Caco-2 (cell line): ENCODE measurements at regions of chr15 and their contacts with region 1.

Region 1: DNA sequence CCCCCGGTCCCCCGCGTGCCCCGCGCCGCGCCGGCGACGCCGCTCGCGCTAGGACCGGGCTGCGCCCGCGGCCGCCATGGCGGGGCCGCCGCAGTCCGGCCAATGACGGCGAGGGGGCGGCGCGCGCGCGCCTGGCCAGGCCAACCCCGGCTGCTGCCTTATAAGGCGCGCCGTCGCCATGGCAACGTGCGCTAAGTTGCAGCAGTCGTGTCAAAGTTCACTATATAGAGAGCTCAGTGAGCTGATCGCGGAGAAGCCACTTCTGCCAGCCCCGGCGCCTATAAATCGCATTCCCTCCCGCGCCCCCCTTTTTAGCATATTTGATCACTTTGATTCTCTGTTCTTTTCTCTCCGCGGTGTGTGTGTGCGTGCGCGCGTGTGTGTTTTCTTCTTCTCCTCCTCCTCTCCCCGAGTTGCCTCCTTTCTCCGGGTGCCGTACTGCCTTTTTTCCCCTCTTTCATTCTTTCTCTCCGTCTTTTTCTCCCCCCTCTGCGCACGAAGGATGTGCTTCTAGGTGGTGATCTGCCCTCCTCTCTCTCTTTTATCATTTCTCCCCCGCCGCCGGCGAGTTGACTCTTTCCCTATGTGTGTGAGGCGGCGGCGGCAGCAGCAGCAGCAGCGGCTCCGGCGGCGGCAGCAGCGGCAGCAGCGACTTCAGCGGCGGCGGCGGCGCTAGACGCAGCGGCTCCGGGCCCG is at the start of gene NR2F2:
- DNase-seq: peak; percentile 96 to 97
- H3K4me3 ChIP-seq: peak within 1 kb of the TSS; percentile 84
- H3K4me3 Mint-ChIP-seq: peak within 1 kb of the TSS; percentile 83
- H3K27ac Mint-ChIP-seq: peak within 1 kb of the TSS; percentile 84
- H3K4me1 ChIP-seq: peaks cover 21% of the 10 kb centered on the region
- H3K4me1 Mint-ChIP-seq: peaks cover 19% of the 10 kb centered on the region
- H3K27me3 ChIP-seq: no peaks in the 10 kb centered on the region
- H3K27me3 Mint-ChIP-seq: no peaks in the 10 kb centered on the region
- CTCF ChIP-seq: no peak
- total RNA-seq, gene NR2F2: 134 and 140 TPM in 2 replicates

Region 2: GRCh38 chr15:95793231-95793630 is 537.4 kb before region 1 on chr15:
- CTCF ChIA-PET with region 1: no interaction called
- POLR2A ChIA-PET with region 1: no interaction called
- intact Hi-C with region 1: loop called (anchors 5 kb)
- DNase-seq: no peak
- H3K4me3 ChIP-seq: no peak overlapping the region
- H3K4me3 Mint-ChIP-seq: no peak overlapping the region
- H3K27ac Mint-ChIP-seq: no peak overlapping the region
- H3K4me1 ChIP-seq: no peaks in the 10 kb centered on the region
- H3K4me1 Mint-ChIP-seq: no peaks in the 10 kb centered on the region
- H3K27me3 ChIP-seq: no peaks in the 10 kb centered on the region
- H3K27me3 Mint-ChIP-seq: no peaks in the 10 kb centered on the region
- CTCF ChIP-seq: no peak

Region 3: GRCh38 chr15:96064351-96064756 is 266.2 kb before region 1 on chr15:
- CTCF ChIA-PET with region 1: interaction called, 3 read pairs
- POLR2A ChIA-PET with region 1: no interaction called
- intact Hi-C with region 1: loop called (anchors 1 kb)
- DNase-seq: peak; percentile 83 to 87
- H3K4me3 ChIP-seq: no peak overlapping the region
- H3K4me3 Mint-ChIP-seq: peak overlapping the region; percentile 69
- H3K27ac Mint-ChIP-seq: peak overlapping the region; percentile 40
- H3K4me1 ChIP-seq: peaks cover 38% of the 10 kb centered on the region
- H3K4me1 Mint-ChIP-seq: peaks cover 18% of the 10 kb centered on the region
- H3K27me3 ChIP-seq: no peaks in the 10 kb centered on the region
- H3K27me3 Mint-ChIP-seq: no peaks in the 10 kb centered on the region
- CTCF ChIP-seq: no peak

Region 4: DNA sequence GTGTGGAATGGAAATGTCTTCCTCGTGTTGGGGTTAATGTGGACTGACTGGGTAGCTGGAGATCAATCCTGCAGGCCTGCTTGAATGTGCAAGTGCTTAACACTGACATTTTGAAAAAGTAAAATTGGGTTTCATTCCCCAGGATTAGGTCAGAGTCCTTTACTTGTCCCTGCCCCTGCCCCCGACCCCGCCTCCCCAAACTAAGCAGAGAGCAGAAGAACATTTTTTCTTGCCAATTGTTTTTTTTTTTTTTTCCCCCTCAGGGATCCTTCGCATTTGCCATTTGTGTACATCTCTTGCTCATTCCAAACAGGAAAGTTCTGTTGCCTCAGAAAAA is 147.1 kb before region 1 on chr15:
- CTCF ChIA-PET with region 1: interaction called, 3 read pairs
- POLR2A ChIA-PET with region 1: interaction called, 11 read pairs
- intact Hi-C with region 1: no loop called
- DNase-seq: peak; percentile 34 to 45
- H3K4me3 ChIP-seq: no peak overlapping the region
- H3K4me3 Mint-ChIP-seq: peak overlapping the region; percentile 52
- H3K27ac Mint-ChIP-seq: peak overlapping the region; percentile 60
- H3K4me1 ChIP-seq: peaks cover 52% of the 10 kb centered on the region
- H3K4me1 Mint-ChIP-seq: peaks cover 57% of the 10 kb centered on the region
- H3K27me3 ChIP-seq: no peaks in the 10 kb centered on the region
- H3K27me3 Mint-ChIP-seq: no peaks in the 10 kb centered on the region
- CTCF ChIP-seq: no peak

Region 5: GRCh38 chr15:96225320-96226259 is 105.0 kb before region 1 on chr15:
- CTCF ChIA-PET with region 1: interaction called, 12 read pairs
- POLR2A ChIA-PET with region 1: interaction called, 24 read pairs
- intact Hi-C with region 1: loop called (anchors 1 kb)
- DNase-seq: peak; percentile 87 to 91
- H3K4me3 ChIP-seq: no peak overlapping the region
- H3K4me3 Mint-ChIP-seq: peak overlapping the region; percentile 12
- H3K27ac Mint-ChIP-seq: peak overlapping the region; percentile 74
- H3K4me1 ChIP-seq: peaks cover 50% of the 10 kb centered on the region
- H3K4me1 Mint-ChIP-seq: peaks cover 49% of the 10 kb centered on the region
- H3K27me3 ChIP-seq: no peaks in the 10 kb centered on the region
- H3K27me3 Mint-ChIP-seq: no peaks in the 10 kb centered on the region
- CTCF ChIP-seq: no peak

Region 6: GRCh38 chr15:96924570-96924969 is 594.0 kb after region 1 on chr15:
- CTCF ChIA-PET with region 1: interaction called, 10 read pairs
- POLR2A ChIA-PET with region 1: no interaction called
- intact Hi-C with region 1: no loop called
- DNase-seq: no peak
- H3K4me3 ChIP-seq: no peak overlapping the region
- H3K4me3 Mint-ChIP-seq: no peak overlapping the region
- H3K27ac Mint-ChIP-seq: no peak overlapping the region
- H3K4me1 ChIP-seq: no peaks in the 10 kb centered on the region
- H3K4me1 Mint-ChIP-seq: no peaks in the 10 kb centered on the region
- H3K27me3 ChIP-seq: no peaks in the 10 kb centered on the region
- H3K27me3 Mint-ChIP-seq: no peaks in the 10 kb centered on the region
- CTCF ChIP-seq: no peak